ENCODE measurements at regions of chr1 and their contacts with region 1.

Region 1: DNA sequence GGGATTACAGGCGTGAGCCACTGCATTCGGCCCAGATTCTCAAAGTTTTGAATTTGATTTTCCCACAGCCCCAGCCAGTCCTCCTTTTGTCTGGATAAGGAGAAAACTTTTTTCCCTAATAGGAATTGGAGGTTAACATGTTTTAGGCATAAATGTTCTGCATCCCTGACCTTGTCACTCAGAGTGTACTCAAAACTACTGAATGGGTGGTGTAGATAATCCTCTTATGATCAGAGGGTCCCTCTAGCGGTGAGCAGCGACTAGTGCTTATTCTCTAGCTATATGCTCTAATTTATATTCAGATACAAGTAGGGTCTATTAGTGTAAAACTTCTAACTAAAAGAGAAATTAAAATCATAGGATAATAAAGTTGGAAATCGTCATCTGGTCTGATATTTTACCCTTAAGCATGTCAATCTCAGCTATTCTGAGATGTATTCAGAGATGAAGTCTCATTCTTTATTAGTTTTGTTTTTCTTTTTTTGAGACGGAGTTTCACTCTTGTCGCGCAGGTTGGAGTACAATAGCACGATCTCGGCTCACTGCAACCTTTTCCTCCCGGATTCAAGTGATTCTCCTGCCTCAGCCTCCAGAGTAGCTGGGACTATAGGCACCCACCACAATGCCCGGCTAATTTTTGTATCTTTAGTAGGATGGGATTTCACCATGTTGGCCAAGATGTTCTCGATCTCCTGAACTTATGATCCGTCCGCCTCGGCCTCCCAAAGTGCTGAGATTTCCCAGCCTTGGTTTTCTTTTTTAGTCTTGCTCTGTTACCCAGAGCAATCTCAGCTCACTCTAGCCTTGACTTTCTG is 2.7 kb upstream of the PSMD4 start:
- DNase-seq: peak; percentile 79
- H3K4me3 Mint-ChIP-seq: no peak overlapping the region
- H3K27ac Mint-ChIP-seq: peak overlapping the region; percentile 42
- H3K4me1 Mint-ChIP-seq: peaks cover 21% of the 10 kb centered on the region
- H3K27me3 Mint-ChIP-seq: peaks cover 4% of the 10 kb centered on the region

Region 2: GRCh38 chr1:150820710-150821512 is 431.0 kb before region 1 on chr1:
- CTCF ChIA-PET with region 1: no interaction called
- DNase-seq: no peak
- H3K4me3 Mint-ChIP-seq: no peak overlapping the region
- H3K27ac Mint-ChIP-seq: no peak overlapping the region
- H3K4me1 Mint-ChIP-seq: no peaks in the 10 kb centered on the region
- H3K27me3 Mint-ChIP-seq: no peaks in the 10 kb centered on the region

Region 3: DNA sequence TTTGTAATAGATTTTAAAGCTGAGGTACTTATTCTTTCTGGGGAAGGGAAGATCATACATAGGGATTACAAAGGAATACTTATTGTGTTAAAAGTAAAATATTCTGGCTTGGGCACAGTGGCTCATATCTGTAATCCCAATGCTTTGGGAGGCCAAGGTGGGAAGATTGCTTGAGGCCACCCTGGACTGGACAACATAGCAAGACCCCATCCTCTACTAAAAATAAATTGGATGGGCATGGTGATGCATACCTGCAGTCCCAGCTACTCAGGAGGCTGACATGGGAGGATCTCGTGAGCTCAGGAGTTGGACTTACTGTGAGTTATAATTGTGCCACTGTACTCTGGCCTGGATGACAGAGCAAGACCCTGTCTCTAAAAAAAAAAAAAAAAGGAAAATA is 153.7 kb before region 1 on chr1:
- CTCF ChIA-PET with region 1: interaction called, 20 read pairs
- DNase-seq: no peak
- H3K4me3 Mint-ChIP-seq: no peak overlapping the region
- H3K27ac Mint-ChIP-seq: no peak overlapping the region
- H3K4me1 Mint-ChIP-seq: no peaks in the 10 kb centered on the region
- H3K27me3 Mint-ChIP-seq: no peaks in the 10 kb centered on the region

Region 4: GRCh38 chr1:151189638-151190445 is 62.0 kb before region 1 on chr1 and contains the start of gene VPS72:
- CTCF ChIA-PET with region 1: interaction called, 12 read pairs
- DNase-seq: peak; percentile 91
- H3K4me3 Mint-ChIP-seq: peak within 1 kb of the TSS; percentile 99
- H3K27ac Mint-ChIP-seq: peak within 1 kb of the TSS; percentile 95
- H3K4me1 Mint-ChIP-seq: peaks cover 35% of the 10 kb centered on the region
- H3K27me3 Mint-ChIP-seq: peaks cover 30% of the 10 kb centered on the region

Region 5: GRCh38 chr1:151196292-151196800 is 55.5 kb before region 1 on chr1:
- CTCF ChIA-PET with region 1: interaction called, 12 read pairs
- DNase-seq: peak; percentile 77
- H3K4me3 Mint-ChIP-seq: peak overlapping the region; percentile 35
- H3K27ac Mint-ChIP-seq: peak overlapping the region; percentile 67
- H3K4me1 Mint-ChIP-seq: peaks cover 34% of the 10 kb centered on the region
- H3K27me3 Mint-ChIP-seq: peaks cover 46% of the 10 kb centered on the region

Region 6: DNA sequence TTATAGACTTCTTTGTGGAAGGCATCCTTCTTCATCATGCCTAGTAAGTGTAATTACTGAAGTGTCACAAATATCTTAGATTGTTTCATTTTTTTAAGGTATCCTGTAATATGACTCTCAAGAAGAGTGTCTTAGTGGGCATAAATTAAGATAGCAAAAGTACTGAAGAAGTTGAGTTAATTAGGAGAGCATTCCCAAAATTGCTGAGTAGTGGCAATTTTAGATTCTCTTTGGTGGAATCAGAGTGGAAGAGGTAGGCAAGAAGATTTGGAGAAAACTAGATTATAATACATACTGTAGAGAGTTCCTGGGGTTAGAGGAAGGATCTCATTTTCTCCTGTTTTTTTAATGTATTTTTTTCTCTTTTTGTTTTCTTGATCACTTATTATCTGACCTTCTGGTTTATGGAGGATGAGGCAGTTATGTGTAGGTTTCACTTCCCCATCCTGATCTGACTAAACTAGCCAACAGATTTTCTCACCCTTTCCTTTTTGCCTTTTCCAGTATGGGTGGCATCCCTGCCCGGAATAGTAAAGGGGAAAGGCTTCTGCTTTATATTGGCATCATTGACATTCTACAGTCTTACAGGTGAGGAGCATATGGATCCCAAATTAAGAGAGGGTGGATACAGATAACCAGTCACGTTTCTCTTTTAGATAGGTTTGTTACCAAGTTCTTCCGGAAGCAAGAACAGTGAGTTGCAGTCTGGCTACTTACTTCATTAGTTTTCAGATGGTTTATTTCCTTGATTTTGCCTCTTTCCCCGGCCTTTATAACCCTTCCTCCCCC is 14.0 kb before region 1 on chr1:
- CTCF ChIA-PET with region 1: interaction called, 18 read pairs
- DNase-seq: no peak
- H3K4me3 Mint-ChIP-seq: no peak overlapping the region
- H3K27ac Mint-ChIP-seq: peak overlapping the region; percentile 30
- H3K4me1 Mint-ChIP-seq: no peaks in the 10 kb centered on the region
- H3K27me3 Mint-ChIP-seq: no peaks in the 10 kb centered on the region

Region 7: DNA sequence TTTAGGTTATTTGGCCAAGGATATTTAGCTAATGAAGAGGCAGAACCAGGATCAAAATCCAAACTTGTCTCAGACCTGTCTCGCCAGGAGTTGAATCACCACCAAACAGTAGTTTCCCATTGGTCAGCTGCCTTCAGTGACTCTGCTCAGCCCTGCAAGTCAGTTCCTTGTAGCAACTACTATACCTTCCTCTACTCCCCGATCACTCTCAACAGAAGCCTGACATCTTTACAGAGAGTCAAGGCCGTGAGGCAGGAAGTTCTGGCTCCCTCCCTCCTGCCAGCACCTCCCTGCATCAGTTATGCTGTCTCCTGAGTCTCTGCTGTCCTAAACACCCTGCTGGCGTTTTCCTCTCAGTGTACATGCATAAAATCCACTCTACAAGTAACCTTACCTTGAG is 15.9 kb after region 1 on chr1:
- CTCF ChIA-PET with region 1: interaction called, 11 read pairs
- DNase-seq: no peak
- H3K4me3 Mint-ChIP-seq: no peak overlapping the region
- H3K27ac Mint-ChIP-seq: peak overlapping the region; percentile 71
- H3K4me1 Mint-ChIP-seq: no peaks in the 10 kb centered on the region
- H3K27me3 Mint-ChIP-seq: no peaks in the 10 kb centered on the region

Region 8: DNA sequence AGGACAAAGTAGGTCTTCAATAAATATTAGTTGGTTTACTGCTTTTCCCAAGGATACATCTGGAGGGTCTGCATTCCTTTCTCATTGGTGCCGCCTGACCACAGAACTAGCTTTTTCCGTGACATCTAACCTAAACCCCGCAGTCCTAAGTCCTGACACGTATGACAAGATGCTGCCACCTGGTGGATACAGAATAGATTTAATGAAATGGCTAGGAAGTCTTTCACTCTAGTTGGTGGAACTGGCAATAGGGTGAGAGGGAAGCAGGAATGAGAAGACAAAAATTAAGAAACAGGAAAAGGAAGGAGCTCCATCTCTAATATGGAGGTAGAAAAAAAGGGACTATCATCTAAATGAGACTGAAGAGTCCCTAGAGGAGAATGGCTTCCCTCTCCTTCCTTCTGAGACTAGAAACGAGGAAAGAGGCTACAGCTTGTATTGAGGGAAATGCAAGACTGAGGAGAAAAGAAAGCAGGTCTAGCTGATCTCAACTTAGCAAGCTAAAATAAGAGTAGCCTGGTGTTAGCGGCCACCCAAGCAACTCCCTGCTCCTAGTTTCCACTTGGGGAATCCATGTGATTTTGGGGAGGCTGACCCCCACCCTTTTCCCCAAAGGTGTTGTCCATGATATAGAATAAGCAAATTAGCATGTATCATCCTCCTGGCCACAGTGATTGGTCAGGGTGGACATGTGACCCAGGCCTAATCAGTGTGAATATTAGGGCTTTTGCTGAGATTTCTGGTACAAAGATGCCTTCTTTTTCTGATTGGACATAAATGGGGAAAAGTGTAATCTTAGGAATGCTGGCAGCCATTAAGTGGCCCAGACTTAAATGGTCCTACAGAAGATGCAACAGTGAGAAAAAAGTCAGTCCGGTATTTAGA is 89.2 kb after region 1 on chr1:
- CTCF ChIA-PET with region 1: interaction called, 11 read pairs
- DNase-seq: peak; percentile 62
- H3K4me3 Mint-ChIP-seq: no peak overlapping the region
- H3K27ac Mint-ChIP-seq: no peak overlapping the region
- H3K4me1 Mint-ChIP-seq: peaks cover 21% of the 10 kb centered on the region
- H3K27me3 Mint-ChIP-seq: no peaks in the 10 kb centered on the region